Aorta (tissue), 5 donors: ENCODE measurements at regions of chr2 and their contacts with region 1.

Region 1: DNA sequence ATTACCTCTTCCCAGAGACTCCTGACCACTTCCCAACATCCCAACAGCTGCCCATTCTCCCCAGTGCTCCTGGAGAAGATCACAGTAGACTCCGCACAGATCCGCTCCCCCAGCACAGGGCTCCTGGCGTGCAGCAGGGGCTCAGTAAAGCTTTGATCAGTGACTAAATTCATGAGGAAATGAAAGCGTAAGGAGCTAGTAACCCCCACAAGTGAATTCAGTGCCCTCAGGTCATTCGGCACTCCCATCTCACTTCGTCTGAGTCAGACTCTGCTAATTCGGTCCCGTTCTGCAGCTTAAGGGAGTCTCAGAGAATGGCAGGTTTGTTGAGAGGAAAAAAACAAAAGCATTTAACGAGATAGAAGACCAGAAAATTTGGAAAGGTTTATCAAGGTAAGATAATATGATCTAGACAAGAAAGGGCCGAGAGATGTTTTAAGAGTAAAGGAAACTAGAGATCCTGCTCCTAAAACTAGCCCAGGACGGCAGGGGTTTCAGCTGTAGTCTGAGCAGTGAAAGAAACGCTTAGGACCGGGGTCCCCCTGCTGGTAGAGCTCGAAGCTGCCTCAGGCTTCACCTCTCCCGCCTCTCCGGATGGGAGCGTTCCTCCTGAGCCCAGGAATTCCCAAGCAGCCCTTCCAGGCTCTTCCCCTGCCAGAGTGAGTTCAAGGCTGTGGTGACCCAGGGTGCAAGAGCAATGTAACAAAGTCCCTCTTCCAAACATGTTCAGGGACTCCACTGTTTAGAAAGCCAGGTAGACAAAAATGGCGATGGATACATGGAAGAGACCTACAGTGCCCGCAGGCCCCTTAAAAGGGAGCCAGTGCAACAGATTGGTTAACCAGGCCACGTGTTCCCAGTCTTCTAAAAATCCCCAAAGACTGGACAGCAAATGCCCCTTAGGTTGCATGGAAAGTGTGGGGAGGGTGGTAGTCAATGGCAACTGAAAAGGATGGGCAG is 127.3 kb downstream of the DNER start:
- DNase-seq: peak; percentile 85 to 94
- ATAC-seq: peak; percentile 94
- H3K4me3 ChIP-seq: no peak overlapping the region
- H3K27ac ChIP-seq: no peak overlapping the region
- H3K4me1 ChIP-seq: no peaks in the 10 kb centered on the region
- H3K27me3 ChIP-seq: no peaks in the 10 kb centered on the region

Region 2: GRCh38 chr2:228681426-228681825 is 905.6 kb before region 1 on chr2:
- intact Hi-C with region 1: loop called in 1 of 2 experiments (anchors 10 kb)
- DNase-seq: no peak
- ATAC-seq: peak; percentile 72
- H3K4me3 ChIP-seq: no peak overlapping the region
- H3K27ac ChIP-seq: no peak overlapping the region
- H3K4me1 ChIP-seq: peaks cover 0 to 2% of the 10 kb centered on the region in 2 donors
- H3K27me3 ChIP-seq: no peaks in the 10 kb centered on the region

Region 3: DNA sequence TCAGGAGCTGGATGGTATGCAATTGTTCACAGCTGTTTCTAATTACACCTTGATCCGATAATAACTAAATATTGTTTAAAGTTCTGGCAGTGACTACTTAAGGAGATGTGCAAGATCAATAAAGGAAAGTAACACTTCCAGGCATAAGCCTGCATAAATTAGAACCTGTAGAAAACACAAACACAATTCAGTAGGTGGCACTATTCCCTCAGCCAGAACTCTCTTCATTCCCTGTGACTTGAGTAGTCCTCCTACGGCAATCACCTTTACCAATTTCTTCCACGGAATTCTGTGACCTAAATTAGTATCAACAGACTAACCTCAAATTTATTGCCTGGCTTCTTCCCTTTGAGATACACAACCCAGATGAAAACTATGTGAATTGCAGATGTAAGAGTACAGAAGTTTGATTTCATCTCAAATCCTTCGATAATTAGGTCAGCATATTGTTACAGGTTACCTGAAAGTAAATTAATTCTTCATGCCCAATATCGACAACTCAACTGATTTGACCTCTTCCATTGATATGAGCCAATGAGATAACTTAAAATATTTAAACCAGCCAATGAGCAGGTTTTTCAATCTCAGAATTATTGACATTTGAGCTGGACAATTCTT is 453.8 kb before region 1 on chr2:
- intact Hi-C with region 1: loop called (anchors 5 kb)
- DNase-seq: no peak
- ATAC-seq: no peak
- H3K4me3 ChIP-seq: no peak overlapping the region
- H3K27ac ChIP-seq: no peak overlapping the region
- H3K4me1 ChIP-seq: peaks cover 3 to 8% of the 10 kb centered on the region in 2 donors
- H3K27me3 ChIP-seq: no peaks in the 10 kb centered on the region

Region 4: DNA sequence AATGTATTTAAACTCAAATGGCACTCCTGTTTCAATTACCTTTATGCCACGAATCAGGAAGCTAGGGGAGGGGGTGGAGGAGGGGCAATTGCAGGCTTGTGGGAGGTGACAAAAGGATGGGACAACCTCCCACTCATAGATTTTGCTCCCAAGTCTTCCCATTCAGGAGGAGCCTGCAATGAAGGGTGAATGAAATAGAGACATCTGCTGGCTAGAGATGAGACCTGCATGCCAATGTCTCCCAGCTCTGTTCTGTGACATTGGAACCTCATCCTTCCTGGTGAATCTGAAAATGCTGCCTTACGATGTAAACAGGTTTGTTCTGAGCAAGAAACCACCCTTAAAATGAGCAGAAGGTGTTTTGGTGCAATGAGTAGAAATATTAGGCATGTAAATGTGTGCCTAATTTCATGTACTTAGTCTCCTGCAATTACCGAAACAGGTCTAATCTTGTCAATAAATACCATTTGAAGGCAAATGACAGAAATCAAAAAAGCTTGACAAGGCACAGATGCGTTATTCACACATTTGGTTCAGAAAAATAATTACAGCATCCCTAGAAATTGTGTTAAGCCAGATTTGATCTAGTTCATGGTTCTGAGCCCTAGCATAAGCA is 313.2 kb before region 1 on chr2:
- intact Hi-C with region 1: loop called (anchors 2 to 5 kb)
- DNase-seq: peak in 1 of 2 donors; percentile 51
- ATAC-seq: peak; percentile 79
- H3K4me3 ChIP-seq: peak overlapping the region in 1 of 2 donors; percentile 31
- H3K27ac ChIP-seq: no peak overlapping the region
- H3K4me1 ChIP-seq: no peaks in the 10 kb centered on the region
- H3K27me3 ChIP-seq: no peaks in the 10 kb centered on the region

Region 5: DNA sequence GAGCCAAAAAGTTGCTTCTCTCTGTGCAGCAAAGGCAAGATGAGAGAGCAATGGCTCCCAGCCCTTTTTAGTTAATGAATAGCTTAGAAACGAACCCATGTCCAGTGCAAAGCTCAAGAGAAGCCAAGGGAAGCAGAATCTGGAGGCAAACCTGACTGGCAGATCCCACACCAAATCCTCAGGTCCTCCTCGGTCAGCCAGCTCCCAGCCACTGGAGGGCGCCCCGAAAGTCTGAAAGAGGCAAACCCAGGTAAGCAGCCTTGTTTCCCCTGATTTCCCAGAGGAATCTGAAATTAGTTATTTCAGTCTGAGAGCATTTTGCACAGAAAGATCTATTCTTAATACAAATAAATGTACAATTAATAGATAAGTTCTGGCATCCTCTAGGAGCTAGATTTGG is 244.7 kb before region 1 on chr2:
- intact Hi-C with region 1: loop called in 1 of 2 experiments (anchors 5 kb)
- DNase-seq: peak; percentile 63 to 79
- ATAC-seq: no peak
- H3K4me3 ChIP-seq: no peak overlapping the region
- H3K27ac ChIP-seq: no peak overlapping the region
- H3K4me1 ChIP-seq: no peaks in the 10 kb centered on the region
- H3K27me3 ChIP-seq: no peaks in the 10 kb centered on the region

Region 6: GRCh38 chr2:229431327-229431954 is 155.6 kb before region 1 on chr2:
- intact Hi-C with region 1: loop called (anchors 5 kb)
- DNase-seq: no peak
- ATAC-seq: no peak
- H3K4me3 ChIP-seq: no peak overlapping the region
- H3K27ac ChIP-seq: no peak overlapping the region
- H3K4me1 ChIP-seq: peaks cover 0 to 2% of the 10 kb centered on the region in 2 donors
- H3K27me3 ChIP-seq: no peaks in the 10 kb centered on the region

Region 7: DNA sequence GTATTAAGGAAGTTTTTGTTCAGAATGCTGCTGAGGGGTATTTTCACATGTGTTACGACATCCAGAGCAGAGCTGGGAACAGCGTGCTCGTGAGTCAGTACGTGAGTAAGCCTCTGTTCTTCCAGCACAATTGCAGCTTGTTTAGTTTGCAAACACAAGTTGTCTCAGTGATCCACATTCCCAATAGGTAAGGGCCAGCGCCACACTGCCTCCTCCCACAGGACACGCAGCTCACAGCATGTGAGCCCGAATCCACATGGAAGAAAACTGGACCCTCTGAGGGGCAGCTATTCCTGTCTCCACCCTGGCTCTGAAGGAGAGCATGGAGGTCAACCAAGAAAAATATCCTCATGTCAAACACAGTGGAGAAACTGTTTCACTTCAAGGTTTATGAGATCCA is 142.0 kb before region 1 on chr2:
- intact Hi-C with region 1: loop called in 1 of 2 experiments (anchors 5 kb)
- DNase-seq: peak; percentile 78 to 85
- ATAC-seq: peak; percentile 90
- H3K4me3 ChIP-seq: peak overlapping the region in 1 of 2 donors; percentile 8
- H3K27ac ChIP-seq: peak overlapping the region; percentile 89 to 100
- H3K4me1 ChIP-seq: peaks cover 0 to 3% of the 10 kb centered on the region in 2 donors
- H3K27me3 ChIP-seq: no peaks in the 10 kb centered on the region

Region 8: DNA sequence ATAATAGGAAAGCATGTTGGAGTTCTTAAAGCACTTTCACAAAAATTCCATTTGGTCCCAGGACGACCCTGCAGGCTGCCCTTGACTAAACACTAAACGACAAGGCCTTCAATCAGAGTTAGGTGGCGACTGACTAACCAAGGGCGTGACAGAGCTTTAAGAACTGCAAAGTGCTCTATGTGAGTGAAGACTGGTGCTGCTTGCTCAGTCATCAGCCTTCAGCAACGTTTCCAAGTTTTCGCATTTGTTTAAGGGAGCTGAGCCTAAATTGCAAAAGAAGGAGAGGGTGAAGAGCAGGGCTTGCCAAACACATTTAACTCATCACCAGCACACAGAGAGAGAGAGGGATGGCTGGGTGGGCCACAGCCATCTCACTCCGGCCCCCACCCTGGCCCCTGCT is 111.2 kb before region 1 on chr2:
- intact Hi-C with region 1: no loop called
- DNase-seq: no peak
- ATAC-seq: no peak
- H3K4me3 ChIP-seq: no peak overlapping the region
- H3K27ac ChIP-seq: no peak overlapping the region
- H3K4me1 ChIP-seq: no peaks in the 10 kb centered on the region
- H3K27me3 ChIP-seq: no peaks in the 10 kb centered on the region